CD4-positive, alpha-beta T cell (primary cell): ENCODE measurements at regions of chr19 and their contacts with region 1.

Region 1: DNA sequence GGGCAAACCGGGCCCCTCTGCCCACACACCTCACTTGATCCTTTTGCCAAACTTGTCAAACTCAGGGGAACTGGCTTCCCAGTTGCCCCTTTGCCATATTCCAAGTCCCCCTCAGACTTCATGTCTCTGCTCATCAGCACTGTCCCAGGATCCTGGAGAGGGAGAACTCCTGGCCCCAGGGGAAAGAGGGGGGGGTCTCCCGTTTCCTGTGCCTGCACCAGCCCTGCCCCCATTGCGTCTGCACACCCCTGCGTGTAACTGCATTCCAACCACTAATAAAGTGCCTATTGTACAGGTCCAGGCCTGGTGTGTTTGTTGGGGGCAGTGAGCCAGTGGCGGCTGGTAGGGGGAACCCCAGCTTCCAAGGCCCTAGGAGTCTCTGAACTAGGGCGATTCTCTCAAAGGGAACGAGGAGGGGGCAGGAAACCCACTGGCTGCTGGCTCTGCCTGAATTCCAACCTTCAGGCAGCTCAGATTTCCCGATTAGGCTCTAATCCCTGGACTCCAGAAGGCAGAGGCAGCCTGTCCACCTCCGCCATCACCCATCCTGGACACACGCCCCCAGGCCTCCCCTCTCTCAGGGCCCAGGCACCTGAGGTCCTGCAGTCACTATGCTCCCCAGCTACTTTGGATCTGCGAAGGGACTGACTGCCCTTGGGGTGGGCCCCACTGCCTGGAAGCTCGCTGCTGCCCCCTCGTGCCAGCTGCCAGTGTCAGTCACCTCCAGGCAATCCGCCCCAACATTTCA is 9.7 kb upstream of the ILF3 start:
- DNase-seq: peak; percentile 79 to 91 (median 84)
- ATAC-seq: peak; percentile 97
- H3K4me3 ChIP-seq: no peak overlapping the region
- H3K4me3 Mint-ChIP-seq: peak overlapping the region; percentile 48
- H3K27ac ChIP-seq: peak overlapping the region; percentile 4 to 34
- H3K27ac Mint-ChIP-seq: peak overlapping the region; percentile 80
- H3K4me1 ChIP-seq: peaks cover 29% of the 10 kb centered on the region
- H3K4me1 Mint-ChIP-seq: peaks cover 31% of the 10 kb centered on the region
- H3K27me3 ChIP-seq: no peaks in the 10 kb centered on the region
- H3K27me3 Mint-ChIP-seq: no peaks in the 10 kb centered on the region
- CTCF ChIP-seq: peak; percentile 87

Region 2: DNA sequence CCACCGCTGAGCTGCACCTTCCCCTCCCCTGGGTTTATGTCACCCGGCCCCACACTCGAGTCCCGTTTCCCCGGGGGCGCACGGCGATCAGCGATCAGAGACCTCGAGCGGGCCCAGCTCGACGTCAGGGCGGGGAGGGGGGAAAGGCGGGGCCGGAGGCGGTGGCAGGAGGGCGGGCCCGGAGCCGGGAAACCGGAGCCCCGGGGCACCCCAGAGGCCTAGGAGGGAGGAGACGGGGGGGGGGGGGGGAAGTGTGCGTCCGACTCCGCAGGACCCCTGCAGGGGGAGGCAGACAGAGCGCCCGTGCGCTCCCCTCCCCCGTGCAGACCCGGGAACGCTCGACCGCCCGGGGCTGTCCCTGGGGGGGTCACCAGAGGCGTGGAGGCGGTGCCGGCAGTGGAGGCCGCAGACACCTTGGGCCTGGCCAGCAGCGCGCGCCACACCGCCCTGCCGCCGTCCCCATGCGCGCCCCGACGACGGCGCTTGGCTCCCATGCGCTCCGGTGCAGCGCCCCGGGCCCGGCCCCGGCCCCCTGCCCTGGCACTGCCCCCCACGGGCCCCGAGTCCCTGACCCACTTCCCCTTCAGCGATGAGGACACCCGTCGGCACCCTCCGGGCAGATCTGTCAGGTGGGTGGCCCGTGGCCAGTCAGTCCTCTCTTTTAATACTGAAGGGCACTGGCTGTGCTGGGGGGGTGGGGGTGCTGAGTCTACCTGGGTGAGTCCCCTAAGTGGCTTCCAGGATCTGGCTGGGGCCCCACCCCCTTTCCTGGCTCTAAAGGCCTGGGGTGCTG is 212.3 kb before region 1 on chr19:
- CTCF ChIA-PET with region 1: no interaction called
- POLR2A ChIA-PET with region 1: no interaction called
- intact Hi-C with region 1: no loop called
- DNase-seq: peak; percentile 43 to 87 (median 62)
- ATAC-seq: peak; percentile 39
- H3K4me3 ChIP-seq: peak overlapping the region; percentile 53
- H3K4me3 Mint-ChIP-seq: peak overlapping the region; percentile 85
- H3K27ac ChIP-seq: peak overlapping the region in 1 of 2 donors; percentile 79
- H3K27ac Mint-ChIP-seq: peak overlapping the region; percentile 87
- H3K4me1 ChIP-seq: peaks cover 64% of the 10 kb centered on the region
- H3K4me1 Mint-ChIP-seq: peaks cover 49% of the 10 kb centered on the region
- H3K27me3 ChIP-seq: peaks cover 17 to 19% of the 10 kb centered on the region in 2 experiments
- H3K27me3 Mint-ChIP-seq: peaks cover 51% of the 10 kb centered on the region
- CTCF ChIP-seq: no peak

Region 3: DNA sequence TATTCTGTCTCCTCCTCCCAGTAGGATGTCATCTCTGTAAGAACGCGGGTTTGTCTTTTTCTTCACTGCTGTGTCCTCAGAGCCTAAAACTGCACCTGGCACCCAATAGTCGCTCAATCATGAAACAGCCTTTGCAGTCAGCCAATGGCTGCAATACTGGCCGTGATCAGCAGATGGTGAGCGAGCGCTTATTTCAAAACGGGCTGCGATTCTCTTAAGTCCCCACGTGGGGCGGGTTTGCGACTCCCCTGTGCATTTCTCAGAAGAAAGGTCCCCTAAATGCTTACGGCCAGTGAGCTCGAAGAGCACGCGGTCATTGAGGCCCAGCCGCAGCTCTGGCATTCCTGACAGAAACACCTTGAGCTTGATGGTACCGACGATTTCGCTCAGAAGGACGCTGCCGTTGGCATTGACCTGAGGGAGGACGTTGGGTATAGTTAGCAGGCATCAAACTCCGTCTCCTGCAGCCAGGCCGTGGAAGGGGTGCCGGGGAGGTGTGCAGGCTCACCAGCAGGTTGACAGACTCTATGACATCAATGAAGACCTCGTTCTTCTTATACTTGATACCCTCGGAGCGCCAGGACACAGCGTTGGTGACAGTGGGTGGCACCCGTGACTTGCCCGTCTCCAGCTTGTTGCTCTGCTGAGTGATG is 63.3 kb before region 1 on chr19:
- CTCF ChIA-PET with region 1: interaction called, 132 read pairs
- POLR2A ChIA-PET with region 1: interaction called, 36 read pairs
- intact Hi-C with region 1: loop called (anchors 1 kb)
- DNase-seq: peak; percentile 81 to 95 (median 89)
- ATAC-seq: peak; percentile 97
- H3K4me3 ChIP-seq: no peak overlapping the region
- H3K4me3 Mint-ChIP-seq: no peak overlapping the region
- H3K27ac ChIP-seq: no peak overlapping the region
- H3K27ac Mint-ChIP-seq: no peak overlapping the region
- H3K4me1 ChIP-seq: peaks cover 18% of the 10 kb centered on the region
- H3K4me1 Mint-ChIP-seq: peaks cover 25% of the 10 kb centered on the region
- H3K27me3 ChIP-seq: no peaks in the 10 kb centered on the region
- H3K27me3 Mint-ChIP-seq: no peaks in the 10 kb centered on the region
- CTCF ChIP-seq: peak; percentile 99

Region 4: DNA sequence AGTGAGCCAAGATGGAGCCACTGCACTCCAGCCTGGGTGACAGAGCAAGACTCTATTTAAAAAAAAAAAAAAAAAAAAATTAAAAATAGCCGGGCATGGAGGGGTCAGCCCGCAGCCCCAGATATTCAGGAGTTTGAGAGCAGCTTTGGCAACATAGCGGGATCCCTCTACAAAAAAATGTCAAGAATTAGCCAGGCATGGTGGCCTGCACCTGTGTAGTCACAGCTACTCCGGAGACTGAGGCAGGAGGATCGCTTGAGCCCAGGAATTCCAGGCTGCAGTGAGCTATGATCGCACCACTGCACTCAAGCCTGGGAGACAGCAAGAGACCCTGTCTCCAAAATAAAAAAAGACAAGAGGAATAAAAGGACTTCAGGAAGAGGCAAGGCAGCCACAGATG is 58.0 kb before region 1 on chr19:
- CTCF ChIA-PET with region 1: interaction called, 132 read pairs
- POLR2A ChIA-PET with region 1: interaction called, 36 read pairs
- intact Hi-C with region 1: loop called (anchors 1 kb)
- DNase-seq: no peak
- ATAC-seq: no peak
- H3K4me3 ChIP-seq: no peak overlapping the region
- H3K4me3 Mint-ChIP-seq: no peak overlapping the region
- H3K27ac ChIP-seq: no peak overlapping the region
- H3K27ac Mint-ChIP-seq: no peak overlapping the region
- H3K4me1 ChIP-seq: peaks cover 11% of the 10 kb centered on the region
- H3K4me1 Mint-ChIP-seq: peaks cover 25% of the 10 kb centered on the region
- H3K27me3 ChIP-seq: no peaks in the 10 kb centered on the region
- H3K27me3 Mint-ChIP-seq: no peaks in the 10 kb centered on the region
- CTCF ChIP-seq: no peak